ENCODE measurements at regions of chr12 and their contacts with region 1.

Region 1: GRCh38 chr12:122051231-122051876 is 27.2 kb upstream of the MLXIP start:
- DNase-seq: no peak
- ATAC-seq: no peak
- H3K4me3 ChIP-seq: no peak overlapping the region
- H3K4me3 Mint-ChIP-seq: no peak overlapping the region
- H3K27ac ChIP-seq: no peak overlapping the region
- H3K27ac Mint-ChIP-seq: no peak overlapping the region
- H3K4me1 ChIP-seq: peaks cover 0 to 4% of the 10 kb centered on the region in 2 donors
- H3K4me1 Mint-ChIP-seq: peaks cover 1% of the 10 kb centered on the region
- H3K27me3 ChIP-seq: no peaks in the 10 kb centered on the region
- H3K27me3 Mint-ChIP-seq: no peaks in the 10 kb centered on the region
- CTCF ChIP-seq: no peak

Region 2: GRCh38 chr12:121861636-121862254 is 189.6 kb before region 1 on chr12:
- CTCF ChIA-PET with region 1: no interaction called
- POLR2A ChIA-PET with region 1: no interaction called
- intact Hi-C with region 1: no loop called
- DNase-seq: no peak
- ATAC-seq: no peak
- H3K4me3 ChIP-seq: no peak overlapping the region
- H3K4me3 Mint-ChIP-seq: no peak overlapping the region
- H3K27ac ChIP-seq: no peak overlapping the region
- H3K27ac Mint-ChIP-seq: no peak overlapping the region
- H3K4me1 ChIP-seq: peaks cover 0 to 6% of the 10 kb centered on the region in 2 donors
- H3K4me1 Mint-ChIP-seq: no peaks in the 10 kb centered on the region
- H3K27me3 ChIP-seq: no peaks in the 10 kb centered on the region
- H3K27me3 Mint-ChIP-seq: no peaks in the 10 kb centered on the region
- CTCF ChIP-seq: no peak

Region 3: GRCh38 chr12:122064025-122064777 is 12.8 kb after region 1 on chr12:
- CTCF ChIA-PET with region 1: interaction called, 30 read pairs
- POLR2A ChIA-PET with region 1: interaction called, 5 read pairs
- intact Hi-C with region 1: loop called (anchors 2 kb)
- DNase-seq: peak; percentile 58
- ATAC-seq: peak; percentile 66
- H3K4me3 ChIP-seq: no peak overlapping the region
- H3K4me3 Mint-ChIP-seq: no peak overlapping the region
- H3K27ac ChIP-seq: no peak overlapping the region
- H3K27ac Mint-ChIP-seq: peak overlapping the region; percentile 65
- H3K4me1 ChIP-seq: peaks cover 30 to 49% of the 10 kb centered on the region in 2 donors
- H3K4me1 Mint-ChIP-seq: peaks cover 47% of the 10 kb centered on the region
- H3K27me3 ChIP-seq: no peaks in the 10 kb centered on the region
- H3K27me3 Mint-ChIP-seq: no peaks in the 10 kb centered on the region
- CTCF ChIP-seq: no peak

Region 4: GRCh38 chr12:122116707-122117535 is 65.6 kb after region 1 on chr12:
- CTCF ChIA-PET with region 1: interaction called, 154 read pairs
- POLR2A ChIA-PET with region 1: no interaction called
- intact Hi-C with region 1: no loop called
- DNase-seq: no peak
- ATAC-seq: no peak
- H3K4me3 ChIP-seq: no peak overlapping the region
- H3K4me3 Mint-ChIP-seq: no peak overlapping the region
- H3K27ac ChIP-seq: no peak overlapping the region
- H3K27ac Mint-ChIP-seq: peak overlapping the region; percentile 61
- H3K4me1 ChIP-seq: no peaks in the 10 kb centered on the region
- H3K4me1 Mint-ChIP-seq: peaks cover 10% of the 10 kb centered on the region
- H3K27me3 ChIP-seq: no peaks in the 10 kb centered on the region
- H3K27me3 Mint-ChIP-seq: no peaks in the 10 kb centered on the region
- CTCF ChIP-seq: no peak

Region 5: GRCh38 chr12:122190842-122191668 is 139.7 kb after region 1 on chr12:
- CTCF ChIA-PET with region 1: interaction called, 22 read pairs
- POLR2A ChIA-PET with region 1: no interaction called
- intact Hi-C with region 1: loop called (anchors 1 kb)
- DNase-seq: peak; percentile 72
- ATAC-seq: peak; percentile 95
- H3K4me3 ChIP-seq: no peak overlapping the region
- H3K4me3 Mint-ChIP-seq: no peak overlapping the region
- H3K27ac ChIP-seq: no peak overlapping the region
- H3K27ac Mint-ChIP-seq: no peak overlapping the region
- H3K4me1 ChIP-seq: no peaks in the 10 kb centered on the region
- H3K4me1 Mint-ChIP-seq: peaks cover 2% of the 10 kb centered on the region
- H3K27me3 ChIP-seq: peaks cover 0 to 4% (median 0%) of the 10 kb centered on the region in 4 experiments
- H3K27me3 Mint-ChIP-seq: peaks cover 16% of the 10 kb centered on the region
- CTCF ChIP-seq: peak; percentile 75